A549 (cell line): ENCODE measurements at regions of chr19 and their contacts with region 1.

Region 1: GRCh38 chr19:17932485-17933338 is at the start of gene CCDC124:
- DNase-seq: peak; percentile 84 to 92
- ATAC-seq: peak; percentile 97 to 98
- H3K4me3 ChIP-seq: peak within 1 kb of the TSS; percentile 90
- H3K27ac ChIP-seq: peak within 1 kb of the TSS; percentile 89 to 91
- H3K4me1 ChIP-seq: peaks cover 9% of the 10 kb centered on the region
- CTCF ChIP-seq: peak; percentile 89
- EP300 ChIP-seq: no peak
- POLR2A ChIP-seq: peak; percentile 63
- RAD21 ChIP-seq: peak; percentile 95 to 98
- polyA plus RNA-seq, gene CCDC124: 20.8 and 35.4 TPM in 2 replicates

Region 2: GRCh38 chr19:17865364-17866311 is 67.1 kb before region 1 on chr19:
- CTCF ChIA-PET with region 1: interaction called, 295 read pairs
- POLR2A ChIA-PET with region 1: interaction called, 22 read pairs
- DNase-seq: peak in 1 of 2 experiments; percentile 67
- ATAC-seq: peak; percentile 51 to 59
- H3K4me3 ChIP-seq: no peak overlapping the region
- H3K27ac ChIP-seq: peak overlapping the region in 1 of 2 experiments; percentile 64; a peak in 3 of 6 replicates
- H3K4me1 ChIP-seq: peaks cover 42% of the 10 kb centered on the region
- CTCF ChIP-seq: no peak
- EP300 ChIP-seq: no peak
- POLR2A ChIP-seq: no peak; the same call in 1 of the 2 replicates
- RAD21 ChIP-seq: no peak

Region 3: GRCh38 chr19:17902701-17903100 is 30.0 kb before region 1 on chr19:
- CTCF ChIA-PET with region 1: interaction called, 21 read pairs
- POLR2A ChIA-PET with region 1: no interaction called
- DNase-seq: no peak
- ATAC-seq: no peak
- H3K4me3 ChIP-seq: no peak overlapping the region
- H3K27ac ChIP-seq: peak overlapping the region in 1 of 2 experiments; percentile 1; a peak in 1 of 6 replicates
- H3K4me1 ChIP-seq: 0 out of 3 replicates have a peak, but pooled peaks cover 5% of the 10 kb centered on the region
- CTCF ChIP-seq: no peak
- EP300 ChIP-seq: no peak
- POLR2A ChIP-seq: no peak
- RAD21 ChIP-seq: no peak

Region 4: DNA sequence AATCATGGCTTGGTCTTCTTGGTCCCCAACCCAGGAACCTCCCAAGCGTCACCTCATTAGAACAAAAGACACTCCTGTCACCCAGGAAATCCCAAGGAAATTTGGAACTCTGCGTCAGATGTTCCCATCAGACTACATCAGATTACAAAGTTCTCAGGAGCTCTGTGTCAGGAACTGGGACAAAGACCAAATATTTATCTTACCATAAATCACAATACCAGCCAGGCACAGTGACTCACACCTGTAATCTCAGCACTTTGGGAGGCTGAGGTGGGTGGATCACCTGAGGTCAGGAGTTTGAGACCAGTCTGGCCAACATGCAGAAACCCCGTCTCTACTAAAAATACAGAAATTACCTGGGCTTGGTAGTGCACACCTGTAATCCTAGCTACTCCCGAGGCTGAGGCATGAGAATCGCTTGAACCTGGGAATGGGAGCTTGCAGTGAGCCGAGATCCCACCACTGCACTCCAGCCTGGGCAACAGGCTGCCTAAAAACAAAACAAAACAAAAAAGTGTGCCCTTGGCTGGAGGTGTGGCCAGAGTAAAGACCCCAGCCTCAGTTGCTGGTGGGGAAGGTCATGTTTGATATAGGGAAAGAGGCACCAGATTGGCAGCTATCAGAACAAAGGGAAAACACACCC is 16.6 kb before region 1 on chr19:
- CTCF ChIA-PET with region 1: interaction called, 12 read pairs
- POLR2A ChIA-PET with region 1: interaction called, 4 read pairs
- DNase-seq: peak; percentile 36 to 73
- ATAC-seq: peak in 1 of 2 experiments; percentile 76; a peak in 4 of 6 replicates
- H3K4me3 ChIP-seq: no peak overlapping the region
- H3K27ac ChIP-seq: peak overlapping the region; percentile 42 to 60; a peak in 3 of 6 replicates
- H3K4me1 ChIP-seq: peaks cover 17% of the 10 kb centered on the region
- CTCF ChIP-seq: no peak
- EP300 ChIP-seq: no peak
- POLR2A ChIP-seq: no peak
- RAD21 ChIP-seq: no peak

Region 5: GRCh38 chr19:18000935-18001778 is 68.4 kb after region 1 on chr19:
- CTCF ChIA-PET with region 1: interaction called, 493 read pairs
- POLR2A ChIA-PET with region 1: interaction called, 8 read pairs
- DNase-seq: peak; percentile 82 to 94
- ATAC-seq: peak; percentile 67 to 73
- H3K4me3 ChIP-seq: peak overlapping the region; percentile 100
- H3K27ac ChIP-seq: peak overlapping the region; percentile 90 to 93
- H3K4me1 ChIP-seq: peaks cover 29% of the 10 kb centered on the region
- CTCF ChIP-seq: no peak
- EP300 ChIP-seq: peak; percentile 26; a peak in 2 of 5 replicates
- POLR2A ChIP-seq: peak; percentile 51
- RAD21 ChIP-seq: no peak

Region 6: GRCh38 chr19:19475849-19476828 is 1543.4 kb after region 1 on chr19:
- CTCF ChIA-PET with region 1: no interaction called
- POLR2A ChIA-PET with region 1: no interaction called
- DNase-seq: peak; percentile 21 to 44
- ATAC-seq: peak; percentile 62 to 87; a peak in 5 of 6 replicates
- H3K4me3 ChIP-seq: no peak overlapping the region
- H3K27ac ChIP-seq: no peak overlapping the region
- H3K4me1 ChIP-seq: peaks cover 9% of the 10 kb centered on the region
- CTCF ChIP-seq: no peak
- EP300 ChIP-seq: no peak
- POLR2A ChIP-seq: no peak
- RAD21 ChIP-seq: peak in 1 of 2 experiments; percentile 37; a peak in 2 of 5 replicates